ENCODE measurements at regions of chr17 and their contacts with region 1.

Region 1: GRCh38 chr17:29219378-29220047 is 27.1 kb upstream of the CRYBA1 start:
- DNase-seq: peak; percentile 82
- ATAC-seq: peak; percentile 91
- H3K4me3 ChIP-seq: no peak overlapping the region
- H3K4me3 Mint-ChIP-seq: no peak overlapping the region
- H3K27ac ChIP-seq: no peak overlapping the region
- H3K27ac Mint-ChIP-seq: no peak overlapping the region
- H3K4me1 ChIP-seq: peaks cover 5 to 7% of the 10 kb centered on the region in 2 donors
- H3K4me1 Mint-ChIP-seq: peaks cover 8% of the 10 kb centered on the region
- H3K27me3 ChIP-seq: no peaks in the 10 kb centered on the region
- H3K27me3 Mint-ChIP-seq: peaks cover 5% of the 10 kb centered on the region
- CTCF ChIP-seq: peak; percentile 99

Region 2: DNA sequence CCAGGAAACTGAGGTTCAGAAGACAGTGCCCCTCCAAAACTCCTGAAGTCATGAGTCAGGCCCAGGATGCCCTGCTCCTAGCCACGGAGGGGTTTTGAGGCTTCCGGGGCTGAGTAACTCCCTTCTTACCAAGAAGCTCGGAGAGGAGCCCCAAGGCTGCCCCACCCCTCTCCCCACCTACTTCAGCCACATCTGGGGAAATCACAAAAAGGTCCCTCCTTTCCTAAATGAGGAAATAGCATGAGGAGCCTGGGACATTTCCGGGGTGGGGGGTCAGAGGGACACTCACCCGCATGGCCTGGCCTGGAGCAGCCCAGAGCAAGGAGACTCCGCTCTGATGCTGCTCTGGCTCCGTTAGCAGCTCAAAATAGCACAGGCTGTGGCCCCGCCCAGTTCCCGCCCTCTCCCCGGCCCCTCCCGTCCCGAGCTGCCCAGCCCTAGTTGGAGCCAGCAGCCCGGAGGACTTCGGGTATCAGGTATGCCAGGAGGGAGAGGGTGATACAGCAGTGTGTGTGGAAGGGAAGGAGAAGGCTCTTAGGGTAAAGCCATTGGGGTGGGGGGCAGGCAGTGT is 79.4 kb before region 1 on chr17:
- CTCF ChIA-PET with region 1: interaction called, 304 read pairs
- POLR2A ChIA-PET with region 1: no interaction called
- intact Hi-C with region 1: loop called (anchors 1 kb)
- DNase-seq: peak; percentile 66
- ATAC-seq: peak; percentile 60
- H3K4me3 ChIP-seq: peak overlapping the region; percentile 53 to 83 (median 75)
- H3K4me3 Mint-ChIP-seq: peak overlapping the region; percentile 91
- H3K27ac ChIP-seq: peak overlapping the region; percentile 42 to 81
- H3K27ac Mint-ChIP-seq: peak overlapping the region; percentile 98
- H3K4me1 ChIP-seq: peaks cover 42 to 60% of the 10 kb centered on the region in 2 donors
- H3K4me1 Mint-ChIP-seq: peaks cover 68% of the 10 kb centered on the region
- H3K27me3 ChIP-seq: no peaks in the 10 kb centered on the region
- H3K27me3 Mint-ChIP-seq: no peaks in the 10 kb centered on the region
- CTCF ChIP-seq: no peak

Region 3: GRCh38 chr17:29180034-29180787 is 39.3 kb before region 1 on chr17 and contains the start of gene MYO18A:
- CTCF ChIA-PET with region 1: interaction called, 16 read pairs
- POLR2A ChIA-PET with region 1: no interaction called
- intact Hi-C with region 1: loop called (anchors 1 kb)
- DNase-seq: peak; percentile 87
- ATAC-seq: peak; percentile 97
- H3K4me3 ChIP-seq: peak within 1 kb of the TSS in 3 of 5 experiments; percentile 33 to 46 (median 44)
- H3K4me3 Mint-ChIP-seq: peak within 1 kb of the TSS; percentile 69
- H3K27ac ChIP-seq: no peak within 1 kb of the TSS
- H3K27ac Mint-ChIP-seq: no peak within 1 kb of the TSS
- H3K4me1 ChIP-seq: peaks cover 9 to 28% of the 10 kb centered on the region in 2 donors
- H3K4me1 Mint-ChIP-seq: peaks cover 16% of the 10 kb centered on the region
- H3K27me3 ChIP-seq: peaks cover 0 to 2% (median 0%) of the 10 kb centered on the region in 4 experiments
- H3K27me3 Mint-ChIP-seq: peaks cover 7% of the 10 kb centered on the region
- CTCF ChIP-seq: peak; percentile 81
- total RNA-seq, gene MYO18A: 155 and 169 TPM in 2 replicates

Region 4: DNA sequence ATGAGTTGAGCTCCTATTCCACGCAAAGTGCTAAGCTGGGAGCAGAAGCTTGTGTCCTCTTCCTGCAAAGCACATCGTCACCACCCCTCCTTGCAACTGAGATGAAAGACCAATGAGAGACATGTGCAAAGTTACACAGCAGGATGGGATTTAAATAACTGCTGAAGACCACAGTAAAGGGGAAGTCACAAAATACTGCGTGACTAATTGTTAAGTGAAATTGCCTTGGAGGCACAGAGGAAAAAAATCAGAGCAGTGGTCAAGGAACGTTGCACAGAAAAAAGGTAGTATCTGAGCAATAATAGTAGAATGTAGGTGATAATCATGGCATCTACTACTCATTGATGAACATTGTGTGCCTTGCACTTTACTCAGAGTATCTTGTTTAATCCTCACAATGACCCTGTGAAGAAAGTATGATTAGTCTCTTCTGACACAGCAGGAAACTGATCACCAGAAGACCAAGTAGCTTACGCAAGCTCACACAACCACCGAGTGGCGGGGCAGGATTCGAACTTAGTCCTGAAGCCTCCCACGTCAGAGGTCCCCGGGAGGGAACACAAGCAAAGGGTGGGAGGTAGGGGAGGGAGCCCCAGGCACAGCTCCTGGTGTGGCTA is 23.9 kb before region 1 on chr17:
- CTCF ChIA-PET with region 1: interaction called, 17 read pairs
- POLR2A ChIA-PET with region 1: no interaction called
- intact Hi-C with region 1: no loop called
- DNase-seq: peak; percentile 64
- ATAC-seq: peak; percentile 87
- H3K4me3 ChIP-seq: peak overlapping the region in 3 of 5 experiments; percentile 17 to 34 (median 25)
- H3K4me3 Mint-ChIP-seq: peak overlapping the region; percentile 64
- H3K27ac ChIP-seq: no peak overlapping the region
- H3K27ac Mint-ChIP-seq: peak overlapping the region; percentile 34
- H3K4me1 ChIP-seq: peaks cover 19 to 22% of the 10 kb centered on the region in 2 donors
- H3K4me1 Mint-ChIP-seq: peaks cover 23% of the 10 kb centered on the region
- H3K27me3 ChIP-seq: no peaks in the 10 kb centered on the region
- H3K27me3 Mint-ChIP-seq: no peaks in the 10 kb centered on the region
- CTCF ChIP-seq: no peak

Region 5: DNA sequence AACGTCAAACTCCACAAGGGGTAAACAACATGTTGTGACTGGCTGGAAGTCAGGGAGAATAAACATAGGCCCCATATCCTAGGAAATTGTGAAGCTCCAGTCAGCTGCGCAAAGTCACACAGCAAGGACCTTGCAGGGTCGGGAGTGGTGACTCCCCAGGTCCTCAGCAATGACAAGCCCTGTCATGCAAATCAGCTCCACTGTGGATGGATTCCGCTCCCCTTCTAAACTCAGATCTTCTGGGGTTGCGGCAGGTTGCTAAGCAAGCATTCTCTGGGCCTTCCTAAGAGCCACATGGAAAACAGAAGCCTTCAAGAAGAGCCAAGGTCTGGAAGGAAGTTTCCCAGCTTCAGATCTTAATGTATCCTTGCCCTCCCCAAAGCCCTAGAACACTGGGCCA is 10.4 kb before region 1 on chr17:
- CTCF ChIA-PET with region 1: interaction called, 13 read pairs
- POLR2A ChIA-PET with region 1: no interaction called
- intact Hi-C with region 1: no loop called
- DNase-seq: no peak
- ATAC-seq: no peak
- H3K4me3 ChIP-seq: no peak overlapping the region
- H3K4me3 Mint-ChIP-seq: no peak overlapping the region
- H3K27ac ChIP-seq: no peak overlapping the region
- H3K27ac Mint-ChIP-seq: no peak overlapping the region
- H3K4me1 ChIP-seq: peaks cover 0 to 5% of the 10 kb centered on the region in 2 donors
- H3K4me1 Mint-ChIP-seq: no peaks in the 10 kb centered on the region
- H3K27me3 ChIP-seq: no peaks in the 10 kb centered on the region
- H3K27me3 Mint-ChIP-seq: peaks cover 2% of the 10 kb centered on the region
- CTCF ChIP-seq: no peak